Activated CD4-positive, alpha-beta memory T cell treated with anti-CD3 and anti-CD28 coated beads for 36 hours (primary cell): ENCODE measurements at regions of chr5 and their contacts with region 1.

Region 1: DNA sequence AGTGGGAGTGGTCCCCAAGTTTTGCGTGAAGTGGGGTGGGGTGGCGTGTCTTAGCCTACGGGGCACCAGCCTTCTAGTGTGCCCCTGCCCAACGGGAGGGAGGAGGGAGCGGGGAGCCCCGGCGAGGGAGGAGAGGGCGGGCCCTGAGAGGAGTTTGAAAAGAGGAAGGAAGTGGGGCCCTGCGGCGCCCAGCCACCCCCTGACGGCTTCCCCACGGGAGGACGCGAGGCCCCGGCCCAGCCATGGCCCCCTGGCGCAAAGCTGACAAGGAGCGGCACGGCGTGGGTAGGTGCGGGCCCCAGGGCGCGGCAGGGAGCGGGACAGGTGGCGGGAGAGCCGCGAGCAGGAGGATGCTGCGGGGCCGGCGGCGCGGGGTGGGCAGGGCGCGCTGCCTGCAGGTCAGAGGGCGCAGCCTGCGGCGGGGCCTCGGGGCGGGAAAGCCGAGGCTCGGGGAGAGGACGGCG is at the start of gene DOCK2:
- DNase-seq: peak; percentile 81
- H3K4me3 Mint-ChIP-seq: peak within 1 kb of the TSS; percentile 85
- H3K27ac Mint-ChIP-seq: peak within 1 kb of the TSS; percentile 90
- H3K4me1 Mint-ChIP-seq: peaks cover 48% of the 10 kb centered on the region
- H3K27me3 Mint-ChIP-seq: peaks cover 1% of the 10 kb centered on the region
- total RNA-seq, gene DOCK2: 191 to 205 TPM

Region 2: GRCh38 chr5:169656125-169656901 is 19.2 kb after region 1 on chr5:
- CTCF ChIA-PET with region 1: interaction called, 4 read pairs
- POLR2A ChIA-PET with region 1: interaction called, 16 read pairs
- intact Hi-C with region 1: loop called (anchors 1 kb)
- DNase-seq: peak; percentile 51
- H3K4me3 Mint-ChIP-seq: peak overlapping the region; percentile 29
- H3K27ac Mint-ChIP-seq: peak overlapping the region; percentile 78
- H3K4me1 Mint-ChIP-seq: peaks cover 69% of the 10 kb centered on the region
- H3K27me3 Mint-ChIP-seq: no peaks in the 10 kb centered on the region

Region 3: DNA sequence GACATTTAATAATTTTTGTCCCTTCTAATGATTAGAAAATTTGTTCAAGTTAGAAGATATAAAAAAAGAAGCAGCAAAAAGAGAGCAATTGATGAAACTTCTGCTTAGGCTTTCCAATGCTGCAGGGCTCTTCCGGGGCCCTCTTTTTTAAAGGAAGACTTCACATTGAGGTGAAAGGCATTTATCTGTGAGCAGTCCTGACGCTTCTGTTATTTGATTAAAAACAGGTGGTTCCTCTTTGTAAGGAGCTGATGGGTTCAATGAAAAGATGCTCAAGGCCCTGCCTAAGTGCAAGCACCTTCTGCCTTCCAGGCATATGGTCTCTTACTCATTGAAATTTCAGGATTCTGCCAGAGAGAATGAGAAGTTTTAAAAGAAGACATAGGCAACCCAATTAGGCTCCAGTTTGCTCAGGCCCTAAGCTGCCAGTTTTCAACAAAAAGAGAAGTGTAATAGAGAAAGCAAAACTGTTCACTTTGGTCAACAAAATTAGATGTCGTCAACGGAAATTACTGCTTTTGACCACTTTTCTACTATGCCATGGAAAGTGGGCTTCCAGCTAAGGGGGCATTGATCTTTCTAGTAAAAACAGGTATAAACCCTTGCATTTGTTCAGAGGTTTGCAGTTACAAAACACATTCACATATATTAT is 243.0 kb after region 1 on chr5:
- CTCF ChIA-PET with region 1: no interaction called
- POLR2A ChIA-PET with region 1: no interaction called
- intact Hi-C with region 1: no loop called
- DNase-seq: no peak
- H3K4me3 Mint-ChIP-seq: no peak overlapping the region
- H3K27ac Mint-ChIP-seq: no peak overlapping the region
- H3K4me1 Mint-ChIP-seq: peaks cover 8% of the 10 kb centered on the region
- H3K27me3 Mint-ChIP-seq: no peaks in the 10 kb centered on the region